ENCODE measurements at regions of chr2 and their contacts with region 1.

Region 1: DNA sequence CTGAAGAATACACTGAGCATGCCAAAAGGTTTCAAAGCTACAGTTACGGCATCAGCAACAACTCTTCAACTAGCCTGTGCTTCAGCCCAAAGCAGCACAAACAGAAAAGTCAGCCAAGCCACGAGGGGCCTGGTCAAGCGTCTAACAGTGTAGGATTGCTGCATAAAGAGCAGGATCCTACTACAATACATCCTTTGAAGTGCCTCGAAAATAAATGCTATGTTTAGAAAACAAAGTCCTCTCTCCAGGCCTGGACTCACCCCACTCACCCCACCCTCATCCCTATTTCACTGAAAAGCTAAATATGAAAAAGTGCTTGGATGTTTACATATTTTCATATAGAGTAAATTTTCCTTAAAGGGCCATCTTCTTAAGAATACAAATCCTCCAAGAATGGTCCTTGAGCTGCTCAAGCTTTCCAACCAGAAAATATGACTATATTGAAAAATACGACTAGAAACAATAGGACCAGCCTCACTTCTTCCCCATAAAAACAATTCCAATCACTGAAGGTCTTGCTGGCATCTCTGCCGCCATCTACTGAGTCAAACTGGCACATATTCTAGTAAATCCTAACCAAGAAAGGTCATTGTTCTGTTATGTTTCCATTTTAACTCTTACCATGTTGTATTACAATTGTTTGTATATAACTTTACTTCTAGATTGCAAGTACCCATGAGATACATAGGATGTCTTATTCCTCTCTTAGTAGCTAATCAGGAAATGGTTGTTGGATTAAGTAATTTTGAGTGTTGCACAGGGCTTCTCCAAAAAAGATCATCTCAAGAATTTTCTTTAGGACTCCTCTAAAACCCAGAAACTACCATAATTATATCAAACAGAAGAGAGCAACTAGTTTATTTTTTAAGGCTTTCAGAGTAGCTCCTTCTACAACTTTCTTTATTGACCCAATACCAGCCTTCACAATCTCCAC is 63.6 kb downstream of the CLHC1 start:
- DNase-seq: peak; percentile 56 to 87
- H3K4me3 ChIP-seq: no peak overlapping the region
- H3K27ac ChIP-seq: peak overlapping the region in 4 of 5 donors; percentile 20 to 75 (median 55)
- H3K4me1 ChIP-seq: peaks cover 25 to 58% (median 38%) of the 10 kb centered on the region in 4 donors
- H3K27me3 ChIP-seq: no peaks in the 10 kb centered on the region
- CTCF ChIP-seq: peak in 5 of 7 experiments; percentile 41 to 85 (median 62)
- EP300 ChIP-seq: no peak
- POLR2A ChIP-seq: no peak

Region 2: DNA sequence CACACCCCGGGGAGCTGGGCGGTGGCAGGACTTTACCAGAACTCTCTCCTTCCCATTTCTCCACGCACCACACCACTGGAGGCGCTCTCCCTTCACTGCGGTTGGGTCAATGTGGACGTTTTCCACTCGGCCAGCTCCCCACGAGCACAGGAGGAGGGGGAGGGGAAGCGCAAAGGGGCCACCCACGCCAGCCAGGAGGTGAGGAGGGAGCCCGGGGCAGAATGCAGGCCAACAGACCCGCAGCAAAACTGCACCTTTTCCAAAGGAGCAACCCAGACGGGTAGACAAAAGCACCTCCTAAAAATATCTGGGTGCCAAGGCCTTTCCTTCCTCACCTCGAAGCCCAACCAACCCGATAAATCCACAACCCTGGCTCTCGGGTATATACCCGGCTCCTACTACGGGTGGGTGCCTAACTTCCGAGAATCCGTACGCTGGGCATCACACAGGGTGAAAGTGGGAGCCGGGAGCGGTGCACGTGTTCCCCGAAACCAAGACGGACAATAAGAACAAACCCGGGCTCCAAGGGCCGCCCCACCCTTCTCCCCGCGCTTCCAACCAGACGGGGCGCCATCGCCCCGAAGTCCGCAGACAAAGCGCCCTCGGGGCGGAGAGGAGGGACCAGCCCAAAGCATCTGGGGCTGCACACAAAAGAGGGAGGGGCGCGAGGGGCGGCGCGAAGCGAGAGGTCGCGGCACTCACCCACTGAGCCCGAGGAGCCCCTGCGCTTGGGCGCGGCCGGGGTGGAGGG is 119.3 kb before region 1 on chr2:
- intact Hi-C with region 1: loop called (anchors 10 kb)
- DNase-seq: peak; percentile 86 to 96
- H3K4me3 ChIP-seq: peak overlapping the region; percentile 89 to 93 (median 89)
- H3K27ac ChIP-seq: peak overlapping the region; percentile 90 to 99 (median 99)
- H3K4me1 ChIP-seq: peaks cover 27 to 59% (median 40%) of the 10 kb centered on the region in 4 donors
- H3K27me3 ChIP-seq: no peaks in the 10 kb centered on the region
- CTCF ChIP-seq: peak in 5 of 7 experiments; percentile 46 to 79 (median 65)
- EP300 ChIP-seq: no peak
- POLR2A ChIP-seq: no peak

Measured in stomach (tissue), 19 donors.